MCF 10A (cell line): ENCODE measurements at regions of chr1 and their contacts with region 1.

Region 1: DNA sequence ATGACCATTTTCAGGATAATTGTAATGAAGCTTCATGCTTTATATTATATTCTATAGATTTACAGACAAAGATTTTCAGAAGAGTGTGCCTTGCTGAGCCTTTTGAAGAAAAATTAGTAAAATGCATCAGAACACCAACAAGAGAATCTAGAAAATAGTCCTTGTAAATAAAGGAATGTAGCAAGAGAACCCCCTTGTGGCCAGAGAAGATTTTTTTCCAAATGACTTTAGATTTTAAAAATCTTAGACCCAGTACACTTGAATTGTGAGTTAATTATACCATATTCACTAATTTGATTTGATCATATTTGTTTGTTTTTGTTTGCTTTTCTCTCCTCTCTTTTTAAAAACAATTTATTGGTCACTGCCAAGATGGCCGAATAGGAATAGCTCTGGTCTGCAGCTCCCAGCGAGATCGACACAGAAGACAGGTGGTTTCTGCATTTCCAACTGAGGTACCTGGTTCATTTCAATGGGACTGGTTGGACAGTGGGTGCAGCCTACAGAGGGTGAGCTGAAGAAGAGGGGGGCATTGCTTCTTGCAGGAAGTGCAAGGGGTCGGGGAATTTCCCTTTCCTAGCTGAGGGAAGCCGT is 12.8 kb upstream of the IFI44L start:
- DNase-seq: peak; percentile 43
- H3K4me3 Mint-ChIP-seq: no peak overlapping the region
- H3K27ac Mint-ChIP-seq: peak overlapping the region; percentile 59
- H3K4me1 Mint-ChIP-seq: no peaks in the 10 kb centered on the region
- H3K27me3 Mint-ChIP-seq: no peaks in the 10 kb centered on the region
- CTCF ChIP-seq: peak; percentile 54

Region 2: GRCh38 chr1:78126506-78126905 is 480.9 kb before region 1 on chr1:
- CTCF ChIA-PET with region 1: interaction called, 148 read pairs
- POLR2A ChIA-PET with region 1: interaction called, 18 read pairs
- intact Hi-C with region 1: loop called (anchors 1 kb)
- DNase-seq: no peak
- H3K4me3 Mint-ChIP-seq: no peak overlapping the region
- H3K27ac Mint-ChIP-seq: no peak overlapping the region
- H3K4me1 Mint-ChIP-seq: no peaks in the 10 kb centered on the region
- H3K27me3 Mint-ChIP-seq: no peaks in the 10 kb centered on the region
- CTCF ChIP-seq: no peak

Region 3: DNA sequence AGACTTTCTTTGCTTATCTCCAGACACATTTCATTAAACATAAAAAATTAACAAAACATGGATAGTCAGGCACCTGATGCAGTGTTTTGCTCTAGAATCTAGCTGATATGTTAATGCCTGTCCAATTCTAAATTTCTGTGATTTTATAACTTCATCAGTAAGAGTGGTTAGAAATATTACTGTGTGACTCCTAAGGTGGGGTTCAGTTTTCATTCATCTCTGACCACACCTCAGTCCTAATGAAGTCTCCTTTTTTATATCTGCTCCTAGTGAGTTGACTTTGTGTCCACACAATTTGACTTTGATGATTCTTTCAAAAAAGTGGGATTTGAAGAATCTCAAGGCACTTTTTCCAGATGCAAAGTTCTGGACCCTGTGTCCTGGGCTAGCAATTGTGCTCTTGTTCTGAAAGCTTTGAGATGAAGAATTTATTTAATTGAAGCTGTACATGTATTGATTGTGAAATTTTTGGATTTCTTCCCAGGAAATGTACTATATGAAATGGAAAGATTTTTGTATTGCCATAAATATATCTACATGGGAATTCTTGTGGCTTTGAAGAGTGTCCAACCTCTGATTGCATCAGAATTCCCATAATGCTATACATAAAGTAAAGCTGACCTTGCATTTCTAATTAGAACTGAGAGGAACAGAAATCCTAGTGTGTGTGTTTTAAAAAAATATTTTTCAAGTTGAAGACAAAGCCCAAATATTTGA is 450.5 kb before region 1 on chr1:
- CTCF ChIA-PET with region 1: interaction called, 15 read pairs
- POLR2A ChIA-PET with region 1: no interaction called
- intact Hi-C with region 1: no loop called
- DNase-seq: peak; percentile 88
- H3K4me3 Mint-ChIP-seq: no peak overlapping the region
- H3K27ac Mint-ChIP-seq: peak overlapping the region; percentile 81
- H3K4me1 Mint-ChIP-seq: peaks cover 25% of the 10 kb centered on the region
- H3K27me3 Mint-ChIP-seq: no peaks in the 10 kb centered on the region
- CTCF ChIP-seq: no peak

Region 4: GRCh38 chr1:78277253-78277652 is 330.2 kb before region 1 on chr1:
- CTCF ChIA-PET with region 1: interaction called, 3 read pairs
- POLR2A ChIA-PET with region 1: no interaction called
- intact Hi-C with region 1: loop called (anchors 5 kb)
- DNase-seq: peak; percentile 74
- H3K4me3 Mint-ChIP-seq: peak overlapping the region; percentile 15
- H3K27ac Mint-ChIP-seq: peak overlapping the region; percentile 73
- H3K4me1 Mint-ChIP-seq: peaks cover 58% of the 10 kb centered on the region
- H3K27me3 Mint-ChIP-seq: no peaks in the 10 kb centered on the region
- CTCF ChIP-seq: no peak

Region 5: DNA sequence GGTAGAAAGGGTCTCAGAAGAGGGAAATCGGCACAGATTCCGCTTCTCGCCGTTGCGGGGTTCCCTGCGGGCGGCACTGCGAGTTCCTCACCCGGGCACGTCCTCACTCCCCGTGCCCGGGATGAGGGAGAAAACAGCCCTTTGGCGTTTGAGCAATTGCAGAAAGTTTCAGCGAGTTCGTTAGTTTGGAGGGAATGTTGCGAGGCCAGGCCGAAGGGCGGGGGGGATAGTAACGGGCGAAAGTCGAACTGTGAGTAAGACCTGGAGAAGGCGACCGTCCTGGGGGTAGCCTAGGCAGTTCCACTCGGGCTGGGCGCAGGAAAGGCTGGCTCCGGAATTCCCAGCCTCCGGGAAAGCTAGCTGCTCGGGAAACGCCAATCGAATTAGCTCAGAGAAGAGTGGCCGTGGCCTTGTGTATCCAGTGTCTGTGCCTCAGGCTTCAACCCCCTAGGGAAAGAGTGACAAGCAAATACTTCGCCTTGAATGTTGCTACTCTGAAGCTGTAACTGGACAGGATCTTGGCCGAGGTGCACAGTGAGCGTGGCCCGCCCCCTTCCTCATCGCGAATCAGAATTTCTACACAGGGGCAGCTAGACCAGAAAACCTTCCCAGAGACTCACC is 115.9 kb before region 1 on chr1:
- CTCF ChIA-PET with region 1: no interaction called
- POLR2A ChIA-PET with region 1: no interaction called
- intact Hi-C with region 1: loop called (anchors 10 kb)
- DNase-seq: peak; percentile 55
- H3K4me3 Mint-ChIP-seq: peak overlapping the region; percentile 94
- H3K27ac Mint-ChIP-seq: no peak overlapping the region
- H3K4me1 Mint-ChIP-seq: peaks cover 27% of the 10 kb centered on the region
- H3K27me3 Mint-ChIP-seq: no peaks in the 10 kb centered on the region
- CTCF ChIP-seq: no peak

Region 6: GRCh38 chr1:78676347-78676982 is 69.0 kb after region 1 on chr1:
- CTCF ChIA-PET with region 1: interaction called, 26 read pairs
- POLR2A ChIA-PET with region 1: no interaction called
- intact Hi-C with region 1: no loop called
- DNase-seq: peak; percentile 76
- H3K4me3 Mint-ChIP-seq: no peak overlapping the region
- H3K27ac Mint-ChIP-seq: no peak overlapping the region
- H3K4me1 Mint-ChIP-seq: no peaks in the 10 kb centered on the region
- H3K27me3 Mint-ChIP-seq: no peaks in the 10 kb centered on the region
- CTCF ChIP-seq: peak; percentile 71